ENCODE measurements at regions of chr21 and their contacts with region 1.

Region 1: GRCh38 chr21:45130324-45130774 is 56.0 kb downstream of the ADARB1 start:
- DNase-seq: no peak
- H3K4me3 ChIP-seq: peak overlapping the region; percentile 46
- CTCF ChIP-seq: no peak

Region 2: DNA sequence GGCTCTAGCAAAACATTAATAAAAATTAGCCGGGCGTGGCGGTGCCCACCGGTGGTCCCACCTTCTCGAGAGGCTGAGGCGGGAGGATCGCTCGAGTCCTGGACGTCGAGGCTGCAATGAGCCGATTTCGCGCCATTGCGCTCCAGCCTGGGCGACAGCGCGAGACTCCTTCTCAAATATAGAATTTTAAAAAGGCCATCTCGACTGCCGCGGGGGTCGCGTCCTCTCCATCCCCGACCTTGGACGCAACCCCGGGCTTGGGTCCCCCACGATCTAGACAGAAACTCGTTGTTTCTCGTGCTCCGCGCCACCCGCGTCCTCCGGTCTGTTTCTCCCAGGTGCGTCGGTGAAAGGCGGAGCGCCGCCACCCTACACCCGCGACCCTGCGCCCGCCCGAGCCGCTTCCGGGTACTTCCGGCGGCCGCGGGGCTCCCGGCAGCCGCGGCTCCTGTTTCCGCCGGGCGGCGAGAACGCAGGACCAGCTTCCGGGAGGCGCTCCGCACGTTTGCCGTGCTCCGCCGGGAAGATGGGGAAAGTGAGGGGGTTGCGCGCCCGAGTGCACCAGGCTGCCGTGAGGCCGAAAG is 190.7 kb before region 1 on chr21 and contains the start of gene SLX9:
- CTCF ChIA-PET with region 1: interaction called, 601 read pairs
- POLR2A ChIA-PET with region 1: no interaction called
- DNase-seq: no peak
- H3K4me3 ChIP-seq: peak within 1 kb of the TSS; percentile 91
- CTCF ChIP-seq: no peak

Region 3: GRCh38 chr21:44958471-44959191 is 171.7 kb before region 1 on chr21:
- CTCF ChIA-PET with region 1: interaction called, 601 read pairs
- POLR2A ChIA-PET with region 1: interaction called, 6 read pairs
- DNase-seq: no peak
- H3K4me3 ChIP-seq: no peak overlapping the region
- CTCF ChIP-seq: no peak

Region 4: GRCh38 chr21:45098867-45099266 is 31.5 kb before region 1 on chr21:
- CTCF ChIA-PET with region 1: interaction called, 50 read pairs
- POLR2A ChIA-PET with region 1: no interaction called
- DNase-seq: no peak
- H3K4me3 ChIP-seq: no peak overlapping the region
- CTCF ChIP-seq: peak; percentile 36

Region 5: GRCh38 chr21:45109831-45110492 is 20.4 kb before region 1 on chr21:
- CTCF ChIA-PET with region 1: interaction called, 65 read pairs
- POLR2A ChIA-PET with region 1: no interaction called
- DNase-seq: no peak
- H3K4me3 ChIP-seq: no peak overlapping the region
- CTCF ChIP-seq: no peak

Region 6: GRCh38 chr21:45281411-45282282 is 151.3 kb after region 1 on chr21:
- CTCF ChIA-PET with region 1: no interaction called
- POLR2A ChIA-PET with region 1: no interaction called
- DNase-seq: no peak
- H3K4me3 ChIP-seq: no peak overlapping the region
- CTCF ChIP-seq: no peak

Region 7: DNA sequence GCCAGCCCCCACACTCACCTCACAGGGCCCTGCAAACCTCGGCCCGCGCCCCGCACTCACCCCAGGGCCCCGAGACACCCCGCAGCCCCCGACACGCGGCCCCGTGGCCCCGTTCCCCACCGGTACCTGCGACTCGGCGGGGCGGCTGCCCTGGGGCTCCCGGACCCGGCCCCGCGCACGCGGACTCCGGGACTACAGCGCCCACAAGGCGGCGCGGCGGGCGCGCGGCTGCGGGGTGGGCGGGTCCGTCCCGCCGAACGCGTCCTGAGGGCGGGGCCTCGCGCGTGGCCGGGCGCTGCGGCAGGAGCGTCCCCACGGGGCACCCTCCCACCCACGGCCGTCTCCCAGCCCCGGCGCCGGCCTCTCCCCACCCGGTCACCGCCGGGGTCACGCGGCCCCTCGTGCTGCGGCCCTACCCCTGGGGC is 411.9 kb after region 1 on chr21 and contains the start of gene SLC19A1:
- CTCF ChIA-PET with region 1: no interaction called
- POLR2A ChIA-PET with region 1: no interaction called
- DNase-seq: no peak
- H3K4me3 ChIP-seq: peak within 1 kb of the TSS; percentile 61
- CTCF ChIP-seq: peak; percentile 46